PC-3 (cell line): ENCODE measurements at regions of chr9 and their contacts with region 1.

Region 1: GRCh38 chr9:22244141-22245011 is 202.2 kb upstream of the DMRTA1 start:
- DNase-seq: peak; percentile 73
- ATAC-seq: peak; percentile 82
- H3K4me3 ChIP-seq: no peak overlapping the region; the same call in 1 of the 2 replicates
- H3K27ac ChIP-seq: peak overlapping the region; percentile 21
- H3K4me1 ChIP-seq: peaks cover 24% of the 10 kb centered on the region
- H3K27me3 ChIP-seq: no peaks in the 10 kb centered on the region
- CTCF ChIP-seq: peak; percentile 71

Region 2: DNA sequence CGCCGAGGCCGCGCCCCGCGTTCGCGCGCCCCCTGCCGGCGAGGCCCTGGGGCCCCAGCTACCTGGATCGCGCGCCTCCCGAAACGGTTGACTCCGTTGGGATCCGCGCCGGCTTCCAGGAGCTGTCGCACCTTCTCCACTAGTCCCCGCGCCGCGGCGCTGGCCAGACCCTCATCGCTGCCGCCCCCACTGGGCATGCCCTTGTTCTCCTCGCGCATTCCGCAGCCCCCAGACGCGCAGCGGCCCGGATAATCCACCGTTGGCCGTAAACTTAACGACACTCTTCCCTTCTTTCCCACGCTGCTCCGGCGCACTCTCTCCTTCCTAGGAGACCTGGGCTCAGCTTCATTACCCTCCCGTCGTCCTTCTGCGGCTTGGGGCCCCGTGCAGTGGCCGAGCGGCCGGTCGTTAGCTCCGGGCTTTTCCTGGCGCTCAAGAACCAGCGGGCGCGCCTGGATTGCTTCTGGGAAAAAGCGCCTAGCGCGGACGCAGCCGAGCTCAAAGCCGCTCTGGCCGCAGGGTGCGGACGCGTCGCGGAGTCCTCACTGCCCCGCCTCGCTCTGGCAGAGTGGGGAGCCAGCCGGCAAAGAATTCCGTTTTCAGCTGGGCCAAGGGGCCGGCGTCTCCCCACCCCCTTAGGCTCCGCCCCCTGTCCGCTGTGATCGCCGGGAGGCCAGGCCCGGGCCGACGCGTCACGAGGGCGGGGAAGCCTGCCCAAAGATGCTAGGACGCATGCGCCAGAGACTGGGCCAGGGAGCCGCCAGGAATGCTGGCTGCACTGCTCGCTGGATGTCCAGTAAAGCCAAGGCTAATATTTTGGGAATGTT is 235.4 kb before region 1 on chr9 and contains the start of gene CDKN2B:
- CTCF ChIA-PET with region 1: interaction called, 15 read pairs
- POLR2A ChIA-PET with region 1: interaction called, 3 read pairs
- intact Hi-C with region 1: loop called (anchors 2 kb)
- DNase-seq: peak; percentile 95
- ATAC-seq: peak; percentile 89
- H3K4me3 ChIP-seq: peak within 1 kb of the TSS; percentile 87
- H3K27ac ChIP-seq: peak within 1 kb of the TSS; percentile 90
- H3K4me1 ChIP-seq: peaks cover 9% of the 10 kb centered on the region
- H3K27me3 ChIP-seq: no peaks in the 10 kb centered on the region
- CTCF ChIP-seq: peak; percentile 83
- total RNA-seq, gene CDKN2B: 32.2 and 32.7 TPM in 2 replicates

Region 3: GRCh38 chr9:22037954-22038690 is 206.3 kb before region 1 on chr9:
- CTCF ChIA-PET with region 1: no interaction called
- POLR2A ChIA-PET with region 1: no interaction called
- intact Hi-C with region 1: loop called (anchors 5 kb)
- DNase-seq: peak; percentile 48
- ATAC-seq: no peak; the same call in 1 of the 2 replicates
- H3K4me3 ChIP-seq: no peak overlapping the region
- H3K27ac ChIP-seq: no peak overlapping the region
- H3K4me1 ChIP-seq: peaks cover 62% of the 10 kb centered on the region
- H3K27me3 ChIP-seq: no peaks in the 10 kb centered on the region
- CTCF ChIP-seq: peak; percentile 44

Region 4: GRCh38 chr9:22103650-22104575 is 140.5 kb before region 1 on chr9:
- CTCF ChIA-PET with region 1: no interaction called
- POLR2A ChIA-PET with region 1: interaction called, 26 read pairs
- intact Hi-C with region 1: loop called (anchors 2 kb)
- DNase-seq: peak; percentile 57
- ATAC-seq: peak; percentile 29
- H3K4me3 ChIP-seq: no peak overlapping the region
- H3K27ac ChIP-seq: peak overlapping the region; percentile 95
- H3K4me1 ChIP-seq: peaks cover 37% of the 10 kb centered on the region
- H3K27me3 ChIP-seq: no peaks in the 10 kb centered on the region
- CTCF ChIP-seq: no peak

Region 5: GRCh38 chr9:22203371-22204138 is 40.8 kb before region 1 on chr9:
- CTCF ChIA-PET with region 1: no interaction called
- POLR2A ChIA-PET with region 1: no interaction called
- intact Hi-C with region 1: no loop called
- DNase-seq: peak; percentile 4
- ATAC-seq: no peak
- H3K4me3 ChIP-seq: no peak overlapping the region
- H3K27ac ChIP-seq: no peak overlapping the region
- H3K4me1 ChIP-seq: peaks cover 14% of the 10 kb centered on the region
- H3K27me3 ChIP-seq: no peaks in the 10 kb centered on the region
- CTCF ChIP-seq: no peak

Region 6: GRCh38 chr9:22307013-22307711 is 62.8 kb after region 1 on chr9:
- CTCF ChIA-PET with region 1: interaction called, 6 read pairs
- POLR2A ChIA-PET with region 1: no interaction called
- intact Hi-C with region 1: loop called (anchors 2 kb)
- DNase-seq: peak; percentile 71
- ATAC-seq: peak; percentile 45
- H3K4me3 ChIP-seq: no peak overlapping the region
- H3K27ac ChIP-seq: no peak overlapping the region
- H3K4me1 ChIP-seq: no peaks in the 10 kb centered on the region; the same call in 1 of the 2 replicates
- H3K27me3 ChIP-seq: no peaks in the 10 kb centered on the region
- CTCF ChIP-seq: peak; percentile 85

Region 7: GRCh38 chr9:22452415-22453010 is 208.1 kb after region 1 on chr9:
- CTCF ChIA-PET with region 1: interaction called, 4 read pairs
- POLR2A ChIA-PET with region 1: no interaction called
- intact Hi-C with region 1: loop called (anchors 2 kb)
- DNase-seq: peak; percentile 67
- ATAC-seq: no peak
- H3K4me3 ChIP-seq: no peak overlapping the region
- H3K27ac ChIP-seq: no peak overlapping the region
- H3K4me1 ChIP-seq: peaks cover 22% of the 10 kb centered on the region
- H3K27me3 ChIP-seq: no peaks in the 10 kb centered on the region
- CTCF ChIP-seq: peak; percentile 82

Region 8: GRCh38 chr9:22645893-22646292 is 401.5 kb after region 1 on chr9:
- CTCF ChIA-PET with region 1: no interaction called
- POLR2A ChIA-PET with region 1: no interaction called
- intact Hi-C with region 1: no loop called
- DNase-seq: peak; percentile 45
- ATAC-seq: peak; percentile 78
- H3K4me3 ChIP-seq: no peak overlapping the region
- H3K27ac ChIP-seq: no peak overlapping the region
- H3K4me1 ChIP-seq: no peaks in the 10 kb centered on the region; the same call in 1 of the 2 replicates
- H3K27me3 ChIP-seq: no peaks in the 10 kb centered on the region
- CTCF ChIP-seq: no peak